ENCODE measurements at regions of chr6 and their contacts with region 1.

Region 1: GRCh38 chr6:160930547-160931377 is 60.8 kb upstream of the MAP3K4 start:
- DNase-seq: peak; percentile 91
- H3K4me3 Mint-ChIP-seq: peak overlapping the region; percentile 71
- H3K27ac Mint-ChIP-seq: peak overlapping the region; percentile 71
- H3K4me1 Mint-ChIP-seq: peaks cover 11% of the 10 kb centered on the region
- H3K27me3 Mint-ChIP-seq: no peaks in the 10 kb centered on the region
- CTCF ChIP-seq: peak; percentile 94

Region 2: GRCh38 chr6:160750276-160750689 is 180.5 kb before region 1 on chr6:
- CTCF ChIA-PET with region 1: interaction called, 5 read pairs
- POLR2A ChIA-PET with region 1: no interaction called
- intact Hi-C with region 1: loop called (anchors 2 kb)
- DNase-seq: peak; percentile 45
- H3K4me3 Mint-ChIP-seq: no peak overlapping the region
- H3K27ac Mint-ChIP-seq: no peak overlapping the region
- H3K4me1 Mint-ChIP-seq: no peaks in the 10 kb centered on the region
- H3K27me3 Mint-ChIP-seq: no peaks in the 10 kb centered on the region
- CTCF ChIP-seq: peak; percentile 70

Region 3: DNA sequence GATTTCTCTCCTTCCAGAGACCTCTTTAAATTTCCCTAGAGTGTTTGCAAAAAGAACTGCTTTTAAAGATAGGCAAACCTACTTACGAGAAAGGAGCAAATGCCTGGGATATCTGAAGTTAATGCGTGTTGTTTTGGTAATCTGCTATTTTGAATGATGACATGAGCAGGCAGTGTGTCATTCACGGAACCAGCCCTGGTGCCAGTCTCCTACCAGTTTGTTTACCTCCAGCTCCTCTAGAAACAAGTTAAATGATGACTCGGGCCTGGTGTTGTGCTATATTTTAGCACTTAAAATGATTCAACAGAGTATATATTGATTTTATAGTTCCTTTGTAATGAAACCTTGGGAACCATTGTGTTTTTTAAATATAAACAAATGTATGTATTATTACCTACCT is 19.7 kb after region 1 on chr6:
- CTCF ChIA-PET with region 1: interaction called, 8 read pairs
- POLR2A ChIA-PET with region 1: interaction called, 28 read pairs
- intact Hi-C with region 1: no loop called
- DNase-seq: peak; percentile 76
- H3K4me3 Mint-ChIP-seq: peak overlapping the region; percentile 40
- H3K27ac Mint-ChIP-seq: peak overlapping the region; percentile 88
- H3K4me1 Mint-ChIP-seq: peaks cover 27% of the 10 kb centered on the region
- H3K27me3 Mint-ChIP-seq: peaks cover under 1% of the 10 kb centered on the region
- CTCF ChIP-seq: no peak

Region 4: DNA sequence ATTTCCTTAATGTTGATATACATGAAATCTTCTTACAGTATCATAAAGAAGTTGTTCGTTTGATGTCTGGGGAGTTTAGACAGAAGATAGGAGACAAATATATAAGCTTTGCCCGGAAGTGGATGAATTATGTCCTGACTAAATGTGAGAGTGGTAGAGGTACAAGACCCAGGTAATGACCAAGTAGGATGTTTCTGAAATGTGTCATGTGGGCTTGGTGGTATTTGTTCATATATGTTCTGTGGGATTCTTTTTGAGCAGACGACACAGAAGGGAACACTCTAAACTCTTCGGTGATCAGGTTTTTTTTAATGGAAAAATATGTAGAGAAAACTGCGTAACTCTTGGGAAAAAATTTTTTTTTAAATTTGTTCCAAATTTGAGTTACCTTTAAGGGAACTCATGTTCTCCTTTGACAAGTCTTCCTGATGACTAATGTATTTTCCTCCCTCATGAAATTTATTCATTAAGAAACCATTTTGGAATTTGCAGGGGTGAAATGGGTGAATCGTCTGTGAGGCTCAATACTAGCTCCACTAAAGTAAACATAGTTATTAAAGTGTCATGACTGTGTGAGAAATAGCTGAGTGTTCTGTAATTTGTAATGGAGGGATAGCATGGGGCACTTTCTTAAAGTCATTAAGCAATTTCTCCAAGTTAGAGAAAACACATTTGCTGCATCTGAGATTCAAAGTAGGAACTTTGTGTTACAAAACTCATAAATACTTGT is 161.4 kb after region 1 on chr6:
- CTCF ChIA-PET with region 1: interaction called, 4 read pairs
- POLR2A ChIA-PET with region 1: interaction called, 4 read pairs
- intact Hi-C with region 1: loop called (anchors 2 kb)
- DNase-seq: peak; percentile 41
- H3K4me3 Mint-ChIP-seq: peak overlapping the region; percentile 21
- H3K27ac Mint-ChIP-seq: peak overlapping the region; percentile 81
- H3K4me1 Mint-ChIP-seq: peaks cover 22% of the 10 kb centered on the region
- H3K27me3 Mint-ChIP-seq: no peaks in the 10 kb centered on the region
- CTCF ChIP-seq: no peak

Measured in MCF 10A (cell line).